K562 (cell line): ENCODE measurements at regions of chr2 and their contacts with region 1.

Region 1: GRCh38 chr2:199480966-199481365 is 23.2 kb upstream of the SATB2 start:
- DNase-seq: no peak
- ATAC-seq: peak; percentile 30; the same call in 1 of the 3 replicates
- H3K4me3 ChIP-seq: no peak overlapping the region
- H3K27ac ChIP-seq: no peak overlapping the region
- H3K4me1 ChIP-seq: no peaks in the 10 kb centered on the region
- H3K27me3 ChIP-seq: no peaks in the 10 kb centered on the region
- CTCF ChIP-seq: peak in 1 of 3 experiments; percentile 21; a peak in 1 of 6 replicates
- EP300 ChIP-seq: no peak
- POLR2A ChIP-seq: no peak
- RAD21 ChIP-seq: peak in 1 of 2 experiments; percentile 16; a peak in 2 of 4 replicates

Region 2: GRCh38 chr2:199405241-199405640 is 75.7 kb before region 1 on chr2:
- CTCF ChIA-PET with region 1: no interaction called
- POLR2A ChIA-PET with region 1: no interaction called
- in situ Hi-C with region 1: no loop called
- intact Hi-C with region 1: loop called (anchors 2 kb)
- DNase-seq: peak; percentile 8 to 19 (median 12)
- ATAC-seq: peak; percentile 82
- H3K4me3 ChIP-seq: no peak overlapping the region
- H3K27ac ChIP-seq: no peak overlapping the region
- H3K4me1 ChIP-seq: no peaks in the 10 kb centered on the region
- H3K27me3 ChIP-seq: no peaks in the 10 kb centered on the region
- CTCF ChIP-seq: peak; percentile 31 to 48 (median 34); a peak in 3 of 6 replicates
- EP300 ChIP-seq: no peak
- POLR2A ChIP-seq: no peak
- RAD21 ChIP-seq: peak in 1 of 2 experiments; percentile 34; a peak in 3 of 4 replicates

Region 3: DNA sequence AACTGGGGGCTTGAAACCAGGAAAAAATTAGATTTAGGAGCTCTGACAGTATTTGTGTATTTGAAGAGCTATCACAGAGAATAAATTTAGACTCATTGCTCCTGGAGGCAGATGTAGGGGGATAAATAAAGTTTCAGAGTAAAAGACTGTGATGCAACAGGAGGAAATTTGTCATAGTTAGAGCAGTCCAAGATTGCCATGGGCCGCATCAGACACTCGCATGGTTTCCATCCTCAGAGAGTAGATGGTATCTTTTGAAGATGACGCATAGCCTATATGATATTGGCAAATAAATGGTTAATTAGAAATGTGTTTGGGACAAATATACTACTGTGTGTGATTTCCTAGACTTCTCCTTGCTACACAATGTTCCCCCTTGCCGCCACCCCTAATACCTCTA is 199.5 kb after region 1 on chr2:
- CTCF ChIA-PET with region 1: no interaction called
- POLR2A ChIA-PET with region 1: no interaction called
- in situ Hi-C with region 1: no loop called
- intact Hi-C with region 1: no loop called
- DNase-seq: no peak
- ATAC-seq: no peak
- H3K4me3 ChIP-seq: no peak overlapping the region
- H3K27ac ChIP-seq: no peak overlapping the region
- H3K4me1 ChIP-seq: no peaks in the 10 kb centered on the region
- H3K27me3 ChIP-seq: no peaks in the 10 kb centered on the region
- CTCF ChIP-seq: no peak
- EP300 ChIP-seq: peak; percentile 10; the same call in 1 of the 2 replicates
- POLR2A ChIP-seq: no peak
- RAD21 ChIP-seq: no peak